MCF 10A (cell line): ENCODE measurements at regions of chr7 and their contacts with region 1.

Region 1: GRCh38 chr7:1473864-1474512 is 14.7 kb upstream of the MICALL2 start:
- DNase-seq: peak; percentile 85
- H3K4me3 Mint-ChIP-seq: no peak overlapping the region
- H3K27ac Mint-ChIP-seq: no peak overlapping the region
- H3K4me1 Mint-ChIP-seq: no peaks in the 10 kb centered on the region
- H3K27me3 Mint-ChIP-seq: no peaks in the 10 kb centered on the region
- CTCF ChIP-seq: peak; percentile 93

Region 2: DNA sequence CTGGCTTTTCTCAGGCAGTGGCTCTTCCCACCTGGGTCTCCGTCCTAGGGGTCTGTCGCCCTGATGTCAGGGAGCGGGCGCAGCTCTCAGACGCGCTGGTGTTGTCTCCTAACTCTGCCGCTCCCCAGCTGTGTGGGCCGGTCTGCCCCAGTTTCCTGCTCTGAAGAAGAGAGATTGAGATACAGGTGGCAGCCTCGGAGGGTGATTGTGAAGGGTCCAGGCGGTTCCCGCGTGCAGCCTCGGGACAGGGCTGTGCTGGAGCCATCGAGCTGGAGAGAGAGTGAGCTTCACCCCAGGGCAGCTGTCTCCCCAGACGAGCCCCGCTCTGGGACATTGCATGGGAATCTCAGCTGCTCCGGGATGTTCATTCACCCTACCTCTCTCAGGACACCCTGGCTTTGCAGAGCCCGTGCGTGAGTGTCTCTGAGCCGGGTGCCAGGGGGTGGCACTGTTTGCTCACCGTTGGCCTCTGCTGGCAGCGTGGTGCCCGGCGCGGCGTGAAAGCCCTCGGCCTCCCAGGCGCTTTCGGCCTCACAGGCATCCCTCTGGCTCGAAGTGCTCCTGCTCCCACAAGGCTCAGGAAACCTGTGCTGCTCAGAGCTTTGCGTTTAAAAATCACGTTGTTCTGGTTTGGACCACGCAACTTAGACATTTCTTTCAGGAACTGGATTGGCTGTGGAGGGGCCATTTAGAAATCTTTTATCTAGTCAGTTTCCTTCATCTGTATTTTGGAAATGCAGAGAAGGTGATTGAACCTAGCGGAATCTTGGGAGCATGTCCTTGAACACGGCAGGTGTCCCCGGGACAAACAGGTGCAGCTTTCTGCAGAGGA is 280.2 kb before region 1 on chr7:
- CTCF ChIA-PET with region 1: interaction called, 11 read pairs
- POLR2A ChIA-PET with region 1: no interaction called
- intact Hi-C with region 1: loop called (anchors 5 kb)
- DNase-seq: peak; percentile 67
- H3K4me3 Mint-ChIP-seq: no peak overlapping the region
- H3K27ac Mint-ChIP-seq: no peak overlapping the region
- H3K4me1 Mint-ChIP-seq: no peaks in the 10 kb centered on the region
- H3K27me3 Mint-ChIP-seq: peaks cover 17% of the 10 kb centered on the region
- CTCF ChIP-seq: peak; percentile 78

Region 3: DNA sequence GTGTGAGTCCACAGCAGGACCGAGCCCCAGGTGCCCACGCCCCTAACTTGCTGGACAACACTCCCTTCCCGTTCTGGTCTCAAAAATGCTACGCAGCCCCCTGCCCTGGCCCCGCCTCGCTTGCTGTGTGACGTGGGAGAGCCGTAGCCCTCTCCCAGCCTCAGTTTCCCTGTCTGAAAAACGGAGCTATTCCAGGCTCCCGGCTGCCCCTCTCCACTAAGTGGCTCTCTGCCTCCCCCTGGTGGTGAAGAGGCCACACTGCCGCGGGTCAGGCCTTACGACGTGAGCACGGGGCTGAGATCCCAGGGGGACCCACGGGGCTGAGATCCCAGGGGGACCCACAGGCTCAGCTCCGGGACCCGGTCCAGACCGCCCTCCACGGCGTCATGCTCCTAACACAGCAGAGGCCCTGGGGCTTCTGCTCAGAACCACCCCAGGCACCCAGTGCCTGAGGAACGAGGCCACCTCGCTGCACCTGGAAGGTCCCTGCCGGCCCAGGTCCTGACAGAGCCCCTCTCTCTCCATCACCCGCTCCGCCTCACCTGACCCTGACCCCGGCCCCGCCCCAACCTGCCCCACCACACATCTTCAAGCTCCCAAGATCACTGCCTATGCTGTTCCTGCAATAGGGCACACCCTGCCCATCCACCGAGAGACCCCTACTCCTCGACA is 41.4 kb before region 1 on chr7:
- CTCF ChIA-PET with region 1: interaction called, 5 read pairs
- POLR2A ChIA-PET with region 1: no interaction called
- intact Hi-C with region 1: loop called (anchors 5 kb)
- DNase-seq: peak; percentile 66
- H3K4me3 Mint-ChIP-seq: no peak overlapping the region
- H3K27ac Mint-ChIP-seq: peak overlapping the region; percentile 3
- H3K4me1 Mint-ChIP-seq: peaks cover 6% of the 10 kb centered on the region
- H3K27me3 Mint-ChIP-seq: no peaks in the 10 kb centered on the region
- CTCF ChIP-seq: peak; percentile 97

Region 4: GRCh38 chr7:1460821-1461645 is 13.0 kb before region 1 on chr7:
- CTCF ChIA-PET with region 1: interaction called, 21 read pairs
- POLR2A ChIA-PET with region 1: interaction called, 6 read pairs
- intact Hi-C with region 1: no loop called
- DNase-seq: no peak
- H3K4me3 Mint-ChIP-seq: no peak overlapping the region
- H3K27ac Mint-ChIP-seq: peak overlapping the region; percentile 73
- H3K4me1 Mint-ChIP-seq: peaks cover 33% of the 10 kb centered on the region
- H3K27me3 Mint-ChIP-seq: no peaks in the 10 kb centered on the region
- CTCF ChIP-seq: no peak

Region 5: DNA sequence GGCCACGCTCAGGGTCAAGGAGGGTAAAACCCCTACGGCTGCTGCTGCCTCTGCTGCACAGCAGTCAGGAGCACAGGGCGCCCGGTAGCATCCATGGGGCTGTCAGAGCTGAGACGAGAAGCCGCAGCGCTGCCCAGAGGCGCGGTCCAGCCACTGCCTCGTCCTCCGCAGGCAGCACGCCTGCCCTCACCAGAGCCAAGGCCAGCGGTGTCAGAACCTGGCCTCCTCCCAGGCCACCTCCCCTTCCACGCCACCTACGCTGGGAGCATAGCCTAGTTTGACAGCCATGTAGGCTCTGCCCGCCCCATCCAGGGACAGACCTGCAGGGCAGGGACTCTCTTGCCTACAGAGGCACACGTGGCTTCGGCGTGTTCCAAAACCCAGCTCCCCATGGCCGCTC is 14.0 kb after region 1 on chr7:
- CTCF ChIA-PET with region 1: interaction called, 11 read pairs
- POLR2A ChIA-PET with region 1: no interaction called
- intact Hi-C with region 1: no loop called
- DNase-seq: no peak
- H3K4me3 Mint-ChIP-seq: no peak overlapping the region
- H3K27ac Mint-ChIP-seq: no peak overlapping the region
- H3K4me1 Mint-ChIP-seq: no peaks in the 10 kb centered on the region
- H3K27me3 Mint-ChIP-seq: no peaks in the 10 kb centered on the region
- CTCF ChIP-seq: no peak